Posterior cingulate gyrus (tissue), 11 donors: ENCODE measurements at regions of chr11 and their contacts with region 1.

Region 1: DNA sequence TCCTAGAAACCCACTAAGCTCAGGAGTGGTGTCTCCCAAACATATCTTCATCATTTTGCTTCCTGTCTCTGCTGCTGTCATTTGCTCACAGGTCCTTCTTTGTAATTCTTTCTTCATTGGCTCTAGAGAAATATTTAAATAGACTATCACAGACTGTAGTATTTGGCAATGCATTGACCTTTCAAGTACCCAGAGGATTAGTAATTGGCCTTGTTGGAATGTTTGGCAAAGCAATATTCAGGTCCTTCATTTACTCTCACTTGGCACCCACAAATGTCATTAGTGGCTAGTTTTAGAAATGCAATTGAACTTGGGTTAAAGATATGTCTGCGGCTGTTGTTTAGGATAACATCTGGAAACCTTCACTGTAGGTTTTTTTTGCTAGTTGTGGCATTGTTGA is 11.6 kb downstream of the OR4C5 start:
- DNase-seq: no peak

Region 2: DNA sequence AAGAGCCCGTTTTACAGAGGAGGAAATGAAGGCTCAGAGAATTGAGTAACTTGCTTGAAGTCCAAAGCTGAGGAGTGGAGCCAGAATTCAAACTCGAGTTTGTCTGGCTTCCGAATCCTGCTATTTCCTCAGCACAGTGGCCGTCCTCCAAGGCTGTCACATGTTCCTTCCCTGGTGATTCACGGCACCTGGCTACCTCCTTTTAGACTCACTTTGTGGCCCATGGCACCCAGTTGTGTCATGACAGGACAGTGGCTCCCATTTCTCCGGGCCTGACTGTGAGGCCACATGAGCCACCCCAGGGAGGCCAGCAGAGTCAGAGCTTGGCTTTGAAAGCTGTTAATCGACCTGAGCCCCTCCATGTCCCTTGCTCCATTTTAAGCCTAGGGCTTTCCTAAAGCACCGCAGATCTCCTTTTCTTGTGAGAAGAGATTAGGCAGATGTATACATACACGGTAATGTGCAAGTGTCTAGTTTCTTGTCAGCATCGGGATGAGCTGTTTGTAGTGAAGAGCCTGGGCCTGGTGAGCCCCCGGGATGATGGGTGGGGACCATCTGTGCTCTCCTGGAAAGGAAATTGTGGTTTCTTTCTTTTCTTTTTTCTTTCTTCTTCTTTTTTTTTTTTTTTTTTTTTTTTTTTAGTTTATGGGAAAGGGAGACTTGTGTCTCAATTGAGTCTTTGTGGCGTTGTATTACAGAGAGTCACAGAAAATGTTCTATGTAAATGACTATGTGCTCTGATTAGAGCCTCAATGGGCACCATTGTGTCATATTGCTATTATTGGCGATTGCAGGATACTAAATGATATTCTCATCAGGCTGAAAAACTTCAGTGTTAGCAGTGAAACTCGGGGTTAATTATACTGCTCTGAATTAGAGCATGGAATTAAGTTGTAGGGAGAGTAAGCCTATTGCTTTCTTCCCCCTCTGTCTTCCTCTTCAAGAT is 319.5 kb before region 1 on chr11:
- intact Hi-C with region 1: no loop called
- DNase-seq: peak in 8 of 10 donors; percentile 30 to 88 (median 54)

Region 3: DNA sequence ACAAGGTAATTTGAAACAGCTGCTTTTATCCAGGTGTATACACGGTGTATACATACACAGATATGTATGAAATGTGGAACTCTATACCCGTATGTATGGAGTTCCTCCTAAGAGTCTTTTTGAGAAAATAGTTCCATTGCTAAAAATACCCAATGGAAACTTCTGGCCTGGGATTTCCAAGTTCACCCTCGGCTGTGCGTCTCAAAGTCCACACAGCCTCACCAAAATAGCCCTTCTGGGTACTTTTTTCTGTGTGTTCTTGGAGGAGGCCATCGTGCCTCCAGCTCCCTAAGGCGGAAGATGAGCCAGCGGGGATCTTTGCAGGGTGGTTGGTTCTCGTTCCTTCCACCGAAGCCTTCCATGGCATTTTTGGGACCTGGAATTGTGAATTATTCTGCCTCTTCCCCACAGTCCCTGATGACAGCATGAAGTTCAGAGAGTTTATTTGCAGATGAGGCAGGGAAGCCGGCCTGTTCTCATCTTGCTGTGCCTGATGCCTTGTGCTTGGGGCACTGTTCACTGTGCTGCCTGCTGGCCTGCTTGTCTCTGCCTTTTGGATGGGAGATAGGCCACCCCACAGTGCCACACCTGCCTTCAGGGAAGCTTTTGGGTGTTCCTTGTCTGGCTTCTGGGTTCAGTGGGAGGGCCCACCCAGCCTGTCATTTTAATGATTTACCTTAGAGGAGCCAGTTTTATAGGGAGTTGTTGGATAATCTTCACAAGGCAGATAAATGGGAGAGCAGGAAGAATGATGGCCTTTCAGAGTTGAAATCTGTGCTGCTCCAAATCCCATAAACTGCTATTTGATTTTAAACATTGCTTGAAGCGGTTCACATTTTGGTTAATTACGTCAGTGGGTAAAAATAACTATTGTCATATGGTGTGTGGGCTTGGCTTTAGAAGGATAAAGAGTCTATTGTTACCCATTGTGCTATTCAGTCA is 250.8 kb before region 1 on chr11:
- intact Hi-C with region 1: no loop called
- DNase-seq: peak in 3 of 10 donors; percentile 43 to 89 (median 52)

Region 4: GRCh38 chr11:48538991-48539390 is 184.3 kb after region 1 on chr11:
- intact Hi-C with region 1: no loop called
- DNase-seq: no peak

Region 5: DNA sequence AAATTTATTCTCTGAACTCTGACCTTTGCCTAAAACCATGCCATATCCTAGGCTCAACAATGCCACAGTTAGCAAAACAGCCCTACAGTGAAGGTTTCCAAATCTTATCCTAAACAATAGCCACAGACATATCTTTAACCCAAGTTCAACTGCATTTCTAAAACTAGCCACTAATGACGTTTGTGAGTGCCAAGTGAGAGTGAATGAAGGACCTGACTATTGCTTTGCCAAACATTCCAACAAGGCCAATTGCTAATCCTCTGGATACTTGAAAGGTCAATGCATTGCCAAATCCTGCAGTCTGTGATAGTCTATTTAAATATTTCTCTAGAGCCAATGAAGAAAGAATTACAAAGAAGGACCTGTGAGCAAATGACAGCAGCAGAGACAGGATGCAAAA is 1675.5 kb after region 1 on chr11:
- intact Hi-C with region 1: loop called (anchors 5 kb)
- DNase-seq: no peak